Activated naive CD4-positive, alpha-beta T cell treated with anti-CD3 and anti-CD28 coated beads for 36 hours (primary cell): ENCODE measurements at regions of chr16 and their contacts with region 1.

Region 1: DNA sequence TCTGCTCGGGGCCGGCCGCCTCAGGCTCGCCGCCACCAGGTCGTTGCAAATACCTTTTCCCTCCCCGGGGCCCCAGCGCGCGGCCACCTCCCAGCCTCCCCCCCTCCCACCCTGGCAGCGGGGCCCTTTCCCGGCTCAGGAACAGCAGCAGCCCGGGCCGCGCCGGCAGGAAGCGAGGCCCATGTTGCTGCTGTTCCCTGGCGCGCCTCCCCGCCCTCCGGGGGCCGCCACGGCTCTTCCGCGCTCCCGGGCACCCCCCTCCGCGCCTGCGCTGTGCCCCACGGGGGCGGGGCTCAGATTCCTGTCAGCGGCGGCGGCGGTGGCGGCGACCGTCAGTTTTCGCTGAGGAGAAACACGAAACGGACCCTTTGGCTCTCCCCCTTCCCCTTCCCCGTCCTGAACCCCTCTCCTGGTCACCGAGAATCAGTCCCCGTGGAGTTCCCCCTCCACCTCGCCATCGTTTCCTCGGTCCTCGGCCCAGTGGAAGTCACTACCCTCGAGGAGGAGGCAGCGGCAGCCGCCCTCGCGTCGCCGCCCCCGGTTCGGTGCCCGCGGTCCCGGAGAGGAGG is at the start of gene NFAT5:
- DNase-seq: peak; percentile 89
- H3K4me3 Mint-ChIP-seq: peak within 1 kb of the TSS; percentile 98
- H3K27ac Mint-ChIP-seq: peak within 1 kb of the TSS; percentile 100
- H3K4me1 Mint-ChIP-seq: peaks cover 50% of the 10 kb centered on the region
- H3K27me3 Mint-ChIP-seq: no peaks in the 10 kb centered on the region
- total RNA-seq, gene NFAT5: 33.0 to 34.0 TPM

Region 2: GRCh38 chr16:69310653-69311532 is 254.9 kb before region 1 on chr16 and contains the start of gene VPS4A:
- CTCF ChIA-PET with region 1: no interaction called
- intact Hi-C with region 1: loop called (anchors 1 kb)
- DNase-seq: peak; percentile 98
- H3K4me3 Mint-ChIP-seq: peak within 1 kb of the TSS; percentile 94
- H3K27ac Mint-ChIP-seq: peak within 1 kb of the TSS; percentile 84
- H3K4me1 Mint-ChIP-seq: peaks cover 31% of the 10 kb centered on the region
- H3K27me3 Mint-ChIP-seq: no peaks in the 10 kb centered on the region
- total RNA-seq, gene VPS4A: 34.3 to 35.8 TPM

Region 3: DNA sequence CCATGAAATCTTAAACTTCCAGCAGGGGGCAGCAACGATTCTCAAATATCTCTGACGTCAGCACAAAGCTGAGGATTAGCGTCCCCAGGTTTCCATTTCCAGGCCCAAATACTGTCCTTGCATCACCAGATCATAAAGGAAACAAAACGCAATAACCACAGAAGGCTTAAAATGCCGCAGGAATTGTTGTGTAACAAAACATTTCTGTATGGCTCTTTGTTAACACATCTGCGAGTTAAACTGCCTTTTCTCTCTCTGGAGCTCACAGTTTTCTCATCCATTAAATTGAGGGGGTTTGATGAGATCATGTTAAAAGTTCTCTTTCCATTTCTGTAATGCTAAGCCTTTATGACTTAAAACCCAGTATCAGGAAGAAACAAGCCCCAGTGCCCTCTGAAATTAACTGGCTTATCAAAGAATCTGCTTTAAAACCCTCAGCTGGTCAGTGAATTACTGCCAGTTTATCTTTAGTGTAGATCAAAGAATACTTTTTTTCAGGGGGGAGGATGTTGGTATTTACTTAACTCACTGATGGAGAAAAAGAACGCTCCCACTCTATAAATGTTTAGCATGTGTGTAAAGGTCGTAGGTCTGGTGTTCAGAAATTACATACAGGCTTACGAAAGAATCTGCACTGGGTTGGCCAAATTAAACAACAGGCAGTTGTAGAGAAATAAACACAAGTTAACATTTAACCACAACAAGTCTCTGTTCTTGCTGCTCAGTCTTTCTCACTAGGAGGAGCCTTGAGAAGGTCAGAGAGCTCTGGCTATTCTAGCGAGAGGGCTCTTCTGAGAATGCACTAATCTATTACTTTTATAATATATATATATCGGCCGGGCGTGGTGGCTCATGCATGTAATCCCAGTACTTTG is 169.3 kb before region 1 on chr16:
- CTCF ChIA-PET with region 1: interaction called, 12 read pairs
- intact Hi-C with region 1: loop called (anchors 1 kb)
- DNase-seq: peak; percentile 87
- H3K4me3 Mint-ChIP-seq: no peak overlapping the region
- H3K27ac Mint-ChIP-seq: peak overlapping the region; percentile 62
- H3K4me1 Mint-ChIP-seq: peaks cover 20% of the 10 kb centered on the region
- H3K27me3 Mint-ChIP-seq: peaks cover 4% of the 10 kb centered on the region

Region 4: GRCh38 chr16:69465083-69465721 is 100.6 kb before region 1 on chr16:
- CTCF ChIA-PET with region 1: interaction called, 7 read pairs
- intact Hi-C with region 1: loop called (anchors 1 kb)
- DNase-seq: peak; percentile 28
- H3K4me3 Mint-ChIP-seq: no peak overlapping the region
- H3K27ac Mint-ChIP-seq: no peak overlapping the region
- H3K4me1 Mint-ChIP-seq: peaks cover 43% of the 10 kb centered on the region
- H3K27me3 Mint-ChIP-seq: no peaks in the 10 kb centered on the region

Region 5: DNA sequence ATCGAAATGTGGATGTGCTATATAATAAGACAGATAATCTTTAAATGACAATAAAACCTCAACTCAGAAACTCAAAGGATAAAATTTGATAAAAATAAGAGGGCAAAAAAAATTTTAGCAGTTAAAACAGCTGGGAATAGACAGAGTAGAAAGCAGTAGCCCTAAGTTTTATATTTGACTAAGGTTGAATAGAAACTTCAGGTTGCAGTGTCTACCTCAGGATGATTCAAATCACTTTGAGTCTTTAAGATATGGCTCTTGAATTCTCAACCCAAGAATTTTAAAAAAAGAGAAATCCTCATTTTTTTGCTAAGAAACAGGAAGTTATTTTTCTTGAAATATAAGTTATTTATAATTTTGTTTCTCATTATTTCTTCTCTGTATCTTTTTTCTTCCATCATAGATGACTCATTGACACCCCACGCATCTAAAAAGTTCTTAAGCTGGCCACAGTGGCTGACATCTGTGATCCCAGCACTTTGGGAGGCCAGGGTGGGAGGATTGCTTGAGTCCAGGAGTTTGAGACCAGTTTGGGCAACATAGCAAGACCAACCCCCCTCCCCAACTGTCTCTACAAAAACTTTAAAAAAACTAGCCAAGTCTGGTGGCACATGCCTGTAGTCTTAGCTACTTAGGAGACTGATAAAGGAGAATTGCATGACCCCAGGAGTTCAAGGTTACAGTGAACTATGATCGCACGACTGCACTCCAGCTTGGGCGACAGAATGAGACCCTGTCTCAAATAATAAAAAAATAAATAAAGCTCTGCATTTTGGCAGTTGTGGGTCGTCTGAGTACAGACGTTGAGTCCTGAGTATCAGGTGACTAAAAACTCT is 23.9 kb after region 1 on chr16:
- CTCF ChIA-PET with region 1: interaction called, 3 read pairs
- intact Hi-C with region 1: loop called (anchors 2 kb)
- DNase-seq: no peak
- H3K4me3 Mint-ChIP-seq: no peak overlapping the region
- H3K27ac Mint-ChIP-seq: no peak overlapping the region
- H3K4me1 Mint-ChIP-seq: peaks cover 46% of the 10 kb centered on the region
- H3K27me3 Mint-ChIP-seq: no peaks in the 10 kb centered on the region

Region 6: DNA sequence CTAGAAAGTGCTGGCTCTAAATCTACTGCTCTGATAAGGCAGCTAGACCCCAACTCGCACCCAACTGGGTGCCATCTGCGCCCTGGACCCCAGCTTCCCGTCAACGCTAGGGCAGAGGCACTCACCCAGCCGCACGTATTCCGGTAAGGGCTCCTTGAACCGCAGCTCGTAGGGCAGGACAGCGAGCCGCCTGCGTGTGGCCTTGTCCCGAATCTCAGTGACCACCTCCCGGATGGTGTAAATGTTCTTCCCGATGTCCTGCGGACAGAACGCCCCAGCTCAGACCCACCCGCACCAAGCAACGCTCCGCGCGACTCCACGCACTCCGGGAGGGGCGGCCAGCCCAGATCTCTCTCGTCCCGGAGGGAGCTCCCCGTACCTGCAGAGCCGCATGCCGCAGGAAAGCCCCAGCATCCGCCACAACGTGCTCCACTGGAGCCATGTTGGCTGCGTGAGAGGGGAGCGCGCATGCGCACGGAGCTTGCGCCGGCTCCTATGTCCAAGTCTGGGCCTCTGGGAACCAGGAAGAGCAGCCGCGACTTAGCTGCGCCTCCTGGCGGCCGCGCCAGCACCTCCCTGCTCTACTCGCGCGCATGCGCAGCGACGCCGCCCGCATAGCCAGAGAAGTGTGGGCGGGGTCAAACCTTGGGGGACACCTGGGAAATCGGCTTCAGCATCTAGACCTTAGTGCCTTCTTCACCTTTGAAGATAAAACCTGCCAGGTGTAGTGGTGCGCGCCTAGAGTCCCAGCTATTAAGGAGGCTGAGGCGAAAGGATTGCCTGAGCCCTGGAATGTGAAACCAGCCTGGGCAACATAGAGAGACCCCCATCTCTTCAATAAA is 188.9 kb after region 1 on chr16 and contains the start of gene NOB1:
- CTCF ChIA-PET with region 1: no interaction called
- intact Hi-C with region 1: loop called (anchors 1 kb)
- DNase-seq: peak; percentile 98
- H3K4me3 Mint-ChIP-seq: peak within 1 kb of the TSS; percentile 97
- H3K27ac Mint-ChIP-seq: peak within 1 kb of the TSS; percentile 97
- H3K4me1 Mint-ChIP-seq: peaks cover 22% of the 10 kb centered on the region
- H3K27me3 Mint-ChIP-seq: no peaks in the 10 kb centered on the region
- total RNA-seq, gene NOB1: 110 to 114 TPM